Activated CD4-positive, alpha-beta T cell treated with anti-CD3 and anti-CD28 coated beads for 36 hours (primary cell): ENCODE measurements at regions of chr1 and their contacts with region 1.

Region 1: GRCh38 chr1:174217787-174218574 is 58.7 kb downstream of the RABGAP1L start:
- DNase-seq: no peak
- ATAC-seq: peak; percentile 51
- H3K4me3 Mint-ChIP-seq: no peak overlapping the region
- H3K27ac Mint-ChIP-seq: no peak overlapping the region
- H3K4me1 Mint-ChIP-seq: peaks cover 12% of the 10 kb centered on the region
- H3K27me3 Mint-ChIP-seq: no peaks in the 10 kb centered on the region

Region 2: GRCh38 chr1:173429471-173430402 is 788.2 kb before region 1 on chr1:
- CTCF ChIA-PET with region 1: interaction called, 3 read pairs
- POLR2A ChIA-PET with region 1: no interaction called
- intact Hi-C with region 1: loop called (anchors 5 to 10 kb)
- DNase-seq: peak; percentile 86
- ATAC-seq: peak; percentile 87
- H3K4me3 Mint-ChIP-seq: peak overlapping the region; percentile 52
- H3K27ac Mint-ChIP-seq: peak overlapping the region; percentile 79
- H3K4me1 Mint-ChIP-seq: peaks cover 25% of the 10 kb centered on the region
- H3K27me3 Mint-ChIP-seq: no peaks in the 10 kb centered on the region

Region 3: DNA sequence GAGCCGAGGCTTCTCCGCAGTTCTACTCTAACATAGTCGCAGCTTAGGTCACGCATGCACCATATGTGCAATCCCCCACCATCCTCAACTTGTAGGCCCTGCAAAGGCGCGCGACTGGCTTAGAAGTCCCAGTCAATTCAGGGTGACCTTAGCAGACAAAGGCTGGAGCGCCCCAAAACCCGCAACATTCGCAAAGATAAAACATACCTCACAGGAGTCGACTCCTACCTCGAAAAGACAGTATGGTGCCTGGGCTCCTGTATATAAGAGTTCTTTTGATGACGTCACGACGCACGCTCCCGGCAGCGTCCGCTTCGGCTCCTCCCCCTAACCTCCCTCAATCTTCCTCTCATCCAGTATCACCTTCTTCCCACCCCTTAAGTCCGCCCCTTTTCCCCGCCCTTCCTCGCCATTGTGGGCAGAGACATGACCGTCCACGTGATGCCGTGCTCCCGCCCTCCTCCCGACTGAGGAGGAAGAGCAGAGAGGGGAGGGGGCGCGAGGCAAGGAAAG is 350.2 kb before region 1 on chr1 and contains the start of gene GAS5:
- CTCF ChIA-PET with region 1: interaction called, 3 read pairs
- POLR2A ChIA-PET with region 1: no interaction called
- intact Hi-C with region 1: loop called (anchors 2 to 10 kb)
- DNase-seq: peak; percentile 100
- ATAC-seq: peak; percentile 82
- H3K4me3 Mint-ChIP-seq: peak within 1 kb of the TSS; percentile 91
- H3K27ac Mint-ChIP-seq: peak within 1 kb of the TSS; percentile 97
- H3K4me1 Mint-ChIP-seq: peaks cover 57% of the 10 kb centered on the region
- H3K27me3 Mint-ChIP-seq: no peaks in the 10 kb centered on the region
- total RNA-seq, gene GAS5: 878 to 1,203 TPM

Region 4: GRCh38 chr1:174022080-174022975 is 195.7 kb before region 1 on chr1 and contains the start of gene RC3H1:
- CTCF ChIA-PET with region 1: interaction called, 6 read pairs
- POLR2A ChIA-PET with region 1: no interaction called
- intact Hi-C with region 1: loop called (anchors 2 to 5 kb)
- DNase-seq: peak; percentile 96
- ATAC-seq: peak; percentile 91
- H3K4me3 Mint-ChIP-seq: peak within 1 kb of the TSS; percentile 87
- H3K27ac Mint-ChIP-seq: peak within 1 kb of the TSS; percentile 96
- H3K4me1 Mint-ChIP-seq: peaks cover 31% of the 10 kb centered on the region
- H3K27me3 Mint-ChIP-seq: no peaks in the 10 kb centered on the region
- total RNA-seq, gene RC3H1: 27.3 to 37.0 TPM

Region 5: DNA sequence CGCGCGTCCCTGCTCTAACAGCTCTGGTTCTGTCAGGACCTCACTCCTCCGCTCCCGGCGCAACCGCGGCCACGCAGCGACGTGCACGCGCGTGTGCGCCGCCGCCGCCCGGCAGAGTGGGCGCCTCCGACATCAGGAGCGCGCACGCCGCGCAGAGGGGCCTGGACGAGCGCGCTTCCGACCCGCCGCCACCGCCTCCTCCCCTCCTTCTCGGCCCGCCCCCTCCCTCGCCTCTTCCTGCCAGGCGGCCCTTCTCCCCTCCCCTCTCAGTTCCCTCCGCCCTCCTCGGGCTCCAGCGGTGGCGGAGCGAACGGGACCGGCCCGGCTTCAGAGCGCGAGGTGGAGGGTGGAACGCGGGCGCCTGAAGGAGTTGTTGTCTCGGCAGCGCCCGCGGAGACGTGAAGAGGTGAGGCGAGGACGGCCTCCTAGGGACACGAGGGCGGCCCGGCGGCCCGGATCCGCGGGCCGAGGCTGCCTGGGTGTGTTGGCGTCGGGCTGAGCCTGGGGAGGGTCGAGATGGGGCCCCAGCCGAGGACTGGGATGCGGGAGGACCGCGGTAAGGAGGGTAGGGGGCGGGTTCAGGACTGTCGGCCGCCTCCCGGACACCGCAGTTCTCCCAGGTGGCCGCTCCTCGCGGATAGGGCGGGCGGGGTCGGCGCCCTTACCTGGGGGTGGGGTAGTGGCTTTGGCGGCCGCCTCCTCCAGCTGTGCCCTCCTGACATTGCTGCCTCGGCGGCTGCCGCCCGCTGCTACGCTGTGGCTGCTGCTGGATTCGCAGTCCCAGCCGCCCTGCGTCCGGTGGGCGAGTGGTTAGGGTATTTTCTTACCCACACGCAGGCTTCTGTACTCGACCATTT is 58.5 kb before region 1 on chr1 and contains the start of gene RABGAP1L:
- CTCF ChIA-PET with region 1: interaction called, 3 read pairs
- POLR2A ChIA-PET with region 1: no interaction called
- intact Hi-C with region 1: loop called (anchors 1 to 2 kb)
- DNase-seq: peak; percentile 97
- ATAC-seq: peak; percentile 83
- H3K4me3 Mint-ChIP-seq: peak within 1 kb of the TSS; percentile 93
- H3K27ac Mint-ChIP-seq: peak within 1 kb of the TSS; percentile 95
- H3K4me1 Mint-ChIP-seq: peaks cover 59% of the 10 kb centered on the region
- H3K27me3 Mint-ChIP-seq: no peaks in the 10 kb centered on the region
- total RNA-seq, gene RABGAP1L: 22.6 to 29.9 TPM